ENCODE measurements at regions of chr17 and their contacts with region 1.

Region 1: DNA sequence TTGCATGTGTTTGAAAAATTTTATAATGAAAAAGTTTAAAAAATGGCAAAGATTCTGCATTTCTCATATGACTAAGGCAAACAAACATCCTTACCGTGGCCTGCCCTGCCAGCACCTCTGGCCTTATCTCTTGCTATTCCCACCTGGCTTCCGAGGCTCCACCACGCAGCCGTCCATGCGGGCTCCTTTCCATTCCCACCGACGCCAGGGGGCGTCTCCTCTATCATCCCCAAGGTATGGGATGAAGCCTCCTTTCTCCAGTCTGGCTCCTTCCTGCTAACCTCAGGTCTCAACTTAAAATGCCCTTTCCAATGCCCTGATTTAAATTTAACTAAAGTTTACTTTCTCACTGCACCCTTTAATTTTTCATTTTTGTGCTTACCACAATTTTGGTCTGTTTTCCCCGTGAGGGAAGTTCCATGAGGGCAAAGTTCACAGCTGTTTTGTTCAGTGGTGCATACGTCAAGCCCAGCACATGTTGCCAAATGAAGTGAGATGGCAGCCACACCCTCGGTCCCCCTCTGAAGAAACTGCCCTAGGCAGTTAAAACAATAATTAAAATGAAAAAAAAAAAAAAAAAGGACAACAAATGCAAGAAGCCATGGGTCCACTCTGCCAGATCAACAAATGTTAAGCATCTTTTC is 13.3 kb upstream of the SDK2 start:
- ATAC-seq: peak in 7 of 8 experiments; percentile 32 to 97 (median 53)
- H3K4me3 ChIP-seq: no peak overlapping the region
- H3K27ac ChIP-seq: no peak overlapping the region
- H3K4me1 ChIP-seq: peaks cover 0 to 3% of the 10 kb centered on the region in 2 donors

Region 2: DNA sequence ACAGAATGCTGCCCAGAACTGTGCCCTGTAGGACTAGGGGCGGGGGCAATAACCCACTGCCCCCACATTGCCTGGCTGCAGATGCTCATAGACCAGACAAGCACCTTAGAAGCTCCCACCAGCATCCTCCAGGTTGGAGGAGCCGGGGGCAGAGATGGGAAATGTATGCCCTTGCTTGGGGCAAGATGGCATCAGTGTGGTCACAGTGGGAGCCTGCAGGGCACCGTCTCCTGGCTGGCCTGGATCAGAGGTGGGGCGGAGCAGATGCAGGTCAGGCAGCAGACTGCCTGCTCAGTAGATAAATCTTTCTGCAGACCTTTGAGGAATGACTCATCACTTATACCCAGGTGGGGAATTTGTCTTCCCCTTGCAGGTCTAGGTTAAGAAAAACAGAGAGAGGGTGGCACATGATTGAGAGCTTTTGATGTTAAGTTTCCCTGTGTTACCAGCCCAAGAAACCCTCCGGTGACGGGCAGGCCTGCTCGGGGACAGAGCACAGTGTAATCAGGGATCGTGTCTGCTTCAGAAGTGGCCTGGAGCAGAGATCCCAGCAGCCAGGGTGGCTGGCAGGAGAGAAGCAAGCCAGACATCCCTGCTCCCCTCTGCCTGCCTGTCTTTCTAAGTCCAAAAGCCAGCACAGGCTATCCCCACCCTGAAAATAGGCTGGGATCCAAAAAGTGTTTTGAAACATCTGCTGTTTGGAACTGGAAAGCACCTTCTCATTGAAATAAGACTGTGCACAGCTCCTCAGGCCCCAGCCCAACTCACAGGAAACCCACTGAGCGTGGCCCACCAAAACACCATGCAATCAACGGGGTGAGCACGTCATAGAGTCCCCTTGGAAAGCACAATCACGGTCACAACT is 495.2 kb after region 1 on chr17:
- in situ Hi-C with region 1: loop called in 1 of 9 experiments (anchors 25 kb)
- ATAC-seq: peak in 7 of 8 experiments; percentile 40 to 91 (median 64)
- H3K4me3 ChIP-seq: no peak overlapping the region
- H3K27ac ChIP-seq: peak overlapping the region in 1 of 2 donors; percentile 62
- H3K4me1 ChIP-seq: peaks cover 14 to 19% of the 10 kb centered on the region in 2 donors

Region 3: GRCh38 chr17:74176546-74177001 is 519.0 kb after region 1 on chr17:
- in situ Hi-C with region 1: loop called in 3 of 9 experiments (anchors 25 kb)
- ATAC-seq: peak; percentile 67 to 97 (median 78)
- H3K4me3 ChIP-seq: no peak overlapping the region
- H3K27ac ChIP-seq: no peak overlapping the region
- H3K4me1 ChIP-seq: peaks cover 7 to 16% of the 10 kb centered on the region in 2 donors

Measured in motor neuron (in vitro differentiated cells).